T-cell (primary cell): ENCODE measurements at regions of chr13 and their contacts with region 1.

Region 1: DNA sequence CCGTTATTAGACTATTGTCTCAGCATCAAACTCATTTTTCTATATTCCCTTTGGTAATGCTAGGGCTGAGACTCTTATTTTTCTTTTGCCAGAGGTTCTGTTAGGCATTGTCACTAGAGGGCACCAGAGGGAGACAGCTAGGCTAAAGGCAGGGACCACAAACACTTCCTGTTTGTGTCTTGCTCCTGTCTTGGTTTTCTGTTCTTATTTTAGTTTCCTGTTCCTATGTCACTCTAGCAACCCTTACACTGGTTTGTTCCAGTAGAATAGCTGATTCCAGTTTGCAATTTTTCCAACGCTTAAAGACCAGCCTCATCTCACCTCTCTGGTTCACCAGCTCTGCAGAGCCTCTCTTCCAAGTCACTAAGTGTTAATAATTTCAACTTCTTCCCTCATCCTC is 772.0 kb downstream of the DIAPH3 start:
- DNase-seq: peak in 34 of 35 experiments; percentile 3 to 83 (median 50)
- ATAC-seq: peak; percentile 87 to 96 (median 94)
- H3K4me3 ChIP-seq: no peak overlapping the region
- H3K4me3 Mint-ChIP-seq: no peak overlapping the region
- H3K27ac ChIP-seq: peak overlapping the region; percentile 39
- H3K27ac Mint-ChIP-seq: no peak overlapping the region
- H3K4me1 ChIP-seq: peaks cover 4 to 6% of the 10 kb centered on the region in 2 experiments
- H3K4me1 Mint-ChIP-seq: no peaks in the 10 kb centered on the region
- H3K27me3 ChIP-seq: peaks cover 0 to 4% of the 10 kb centered on the region in 2 experiments
- H3K27me3 Mint-ChIP-seq: peaks cover 5 to 11% of the 10 kb centered on the region in 2 donors

Region 2: DNA sequence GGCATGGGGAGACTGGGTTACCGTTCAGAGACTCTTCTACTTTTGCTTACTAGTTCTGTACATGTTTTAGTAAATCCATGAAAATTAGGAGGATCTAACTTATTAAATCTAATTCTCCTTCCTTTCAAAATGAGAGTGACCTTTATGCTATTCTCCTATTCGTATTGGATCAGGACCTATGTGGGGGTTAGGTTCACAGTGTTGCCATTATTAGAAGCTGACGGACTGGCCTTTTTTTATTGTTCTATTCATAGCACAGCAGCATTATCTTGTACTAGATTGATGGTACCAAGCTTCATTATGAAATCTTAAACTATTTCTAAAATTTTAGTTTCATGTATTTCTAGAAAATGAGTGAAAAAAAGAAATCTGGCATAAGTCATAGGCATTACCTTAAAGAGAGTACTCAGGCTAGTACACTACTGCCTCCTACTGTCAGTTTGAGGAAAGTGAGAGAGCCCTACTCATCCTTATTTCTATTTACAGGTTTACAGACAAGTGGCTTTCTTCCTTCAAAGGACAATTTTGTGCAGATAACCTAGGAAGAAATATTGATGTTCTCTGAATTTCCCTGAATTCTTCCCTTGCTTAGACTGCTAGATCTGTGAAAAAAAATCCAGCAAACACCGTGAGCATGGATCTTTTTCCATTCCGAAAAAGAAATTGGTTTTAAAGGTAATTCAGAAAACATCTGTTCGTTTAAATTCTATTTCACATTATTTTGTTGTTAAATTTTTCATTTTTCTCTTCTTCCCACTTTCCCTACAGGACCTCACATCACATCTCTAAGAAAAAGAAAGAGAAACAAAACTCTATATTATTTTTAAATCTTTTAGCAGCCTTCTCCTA is 286.5 kb after region 1 on chr13:
- CTCF ChIA-PET with region 1: interaction called, 8 to 10 read pairs
- POLR2A ChIA-PET with region 1: no interaction called
- DNase-seq: peak in 2 of 35 experiments; percentile 6 to 56
- ATAC-seq: peak in 2 of 4 experiments; percentile 55 to 65
- H3K4me3 ChIP-seq: no peak overlapping the region
- H3K4me3 Mint-ChIP-seq: no peak overlapping the region
- H3K27ac ChIP-seq: no peak overlapping the region
- H3K27ac Mint-ChIP-seq: no peak overlapping the region
- H3K4me1 ChIP-seq: no peaks in the 10 kb centered on the region
- H3K4me1 Mint-ChIP-seq: peaks cover 0 to 6% (median 3%) of the 10 kb centered on the region in 3 donors
- H3K27me3 ChIP-seq: no peaks in the 10 kb centered on the region
- H3K27me3 Mint-ChIP-seq: no peaks in the 10 kb centered on the region